Activated T-helper 2 cell treated with anti-CD3 and anti-CD28 coated beads, Interferon-gamma antibody, Interleukin-2, Interleukin-4, amounts not matched to agents 10 μg/mL and 5 μg/mL and 100 μg/mL, durations not matched to agents 14 hours and 24 hours and 36 hours (primary cell): ENCODE measurements at regions of chr2 and their contacts with region 1.

Region 1: DNA sequence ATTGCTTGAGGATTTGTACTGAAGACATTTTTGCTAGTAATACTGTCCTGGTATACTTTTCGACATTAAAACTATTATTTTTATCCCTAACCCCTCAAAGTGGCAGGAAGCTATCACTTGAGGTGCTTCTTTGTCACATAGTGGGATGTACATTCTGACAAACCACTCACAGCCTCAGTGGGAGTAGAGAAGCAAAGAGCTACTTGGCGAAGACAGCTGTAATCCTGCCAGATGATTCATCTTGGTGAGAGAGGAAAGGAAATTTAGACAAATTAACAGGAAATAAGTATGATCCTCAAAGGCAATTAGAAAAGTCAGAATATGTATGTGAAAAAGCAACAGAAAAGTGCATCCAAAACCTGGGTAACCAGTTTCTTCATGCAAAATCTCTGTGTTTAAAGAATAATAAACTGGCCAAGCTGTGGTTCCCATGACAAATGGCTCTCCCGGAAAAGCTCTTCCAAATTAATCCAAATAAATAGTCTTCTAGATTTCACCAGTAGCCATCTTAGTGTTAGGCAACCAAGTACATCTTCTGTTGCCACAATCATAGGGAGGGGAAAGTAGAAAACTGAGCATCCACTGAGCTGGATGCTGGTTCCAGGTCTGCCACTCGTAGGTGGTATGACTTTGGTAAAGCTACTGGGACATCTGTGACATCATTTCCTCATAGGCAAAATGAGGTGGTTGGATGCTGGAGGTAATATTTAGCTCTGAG is 308.0 kb upstream of the LYPD1 start:
- DNase-seq: no peak
- H3K4me3 Mint-ChIP-seq: no peak overlapping the region
- H3K27ac Mint-ChIP-seq: no peak overlapping the region
- H3K4me1 Mint-ChIP-seq: peaks cover 2% of the 10 kb centered on the region
- H3K27me3 Mint-ChIP-seq: no peaks in the 10 kb centered on the region

Region 2: GRCh38 chr2:132896073-132896472 is 81.9 kb before region 1 on chr2:
- intact Hi-C with region 1: loop called (anchors 5 kb)
- DNase-seq: no peak
- H3K4me3 Mint-ChIP-seq: peak overlapping the region; percentile 43
- H3K27ac Mint-ChIP-seq: peak overlapping the region; percentile 59
- H3K4me1 Mint-ChIP-seq: peaks cover 6% of the 10 kb centered on the region
- H3K27me3 Mint-ChIP-seq: no peaks in the 10 kb centered on the region

Region 3: DNA sequence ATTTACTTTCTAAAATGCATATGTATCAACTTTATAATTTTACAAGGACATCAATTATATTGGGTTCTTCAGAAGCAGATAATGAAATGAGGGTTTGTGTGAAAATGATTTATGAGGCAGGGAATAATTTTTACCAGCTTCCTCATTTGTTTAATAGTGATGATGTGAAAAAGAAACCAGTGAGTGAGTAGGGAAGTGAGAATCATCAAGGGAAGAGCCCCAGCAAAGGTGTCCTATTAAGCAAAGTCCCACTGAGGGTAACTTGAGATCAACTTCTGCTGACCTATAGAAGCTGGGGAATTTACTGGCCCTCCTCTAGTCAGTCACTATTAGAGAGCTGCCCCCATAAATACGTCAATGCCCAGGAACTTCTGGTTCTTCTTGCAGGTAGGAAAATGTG is 41.2 kb before region 1 on chr2:
- intact Hi-C with region 1: no loop called
- DNase-seq: no peak
- H3K4me3 Mint-ChIP-seq: no peak overlapping the region
- H3K27ac Mint-ChIP-seq: no peak overlapping the region
- H3K4me1 Mint-ChIP-seq: no peaks in the 10 kb centered on the region
- H3K27me3 Mint-ChIP-seq: no peaks in the 10 kb centered on the region